AG04450 (cell line): ENCODE measurements at regions of chr16 and their contacts with region 1.

Region 1: DNA sequence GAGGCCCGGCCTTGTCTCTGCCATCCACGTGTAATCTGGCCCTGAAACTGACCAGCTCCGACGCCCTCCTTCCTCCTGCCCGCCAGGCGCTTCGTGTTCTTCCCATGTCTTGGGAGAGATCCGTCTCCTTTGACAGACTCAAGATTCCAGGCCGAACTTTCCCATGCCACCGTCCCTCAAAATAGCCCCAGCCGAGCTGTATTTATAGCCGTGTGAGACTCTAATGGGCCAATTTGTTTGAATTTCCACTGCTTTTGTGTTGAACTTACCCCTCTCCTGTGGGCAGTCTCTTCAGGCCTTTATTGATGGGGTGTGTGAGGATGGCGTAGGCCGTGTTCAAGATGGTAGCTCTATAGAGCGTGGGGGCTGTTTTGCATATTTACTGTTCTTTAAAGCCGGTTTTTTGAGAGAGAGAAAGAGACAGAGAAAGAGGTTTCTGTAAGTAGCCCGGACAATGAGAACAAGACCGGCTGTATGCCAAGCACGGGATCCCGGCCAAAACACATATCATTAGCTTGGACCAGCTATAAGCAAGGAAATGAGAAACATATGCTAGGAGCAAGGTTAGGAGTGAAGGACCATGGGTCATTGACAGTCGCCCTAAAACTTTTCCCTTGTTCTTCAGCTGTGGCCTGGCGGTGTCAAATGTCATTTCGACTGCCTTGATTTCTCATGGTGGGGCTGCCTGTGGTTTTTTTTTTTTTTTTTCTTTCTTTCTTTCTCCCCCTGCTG is 124.5 kb upstream of the ZFHX3 start:
- DNase-seq: peak; percentile 67
- H3K4me3 ChIP-seq: peak overlapping the region; percentile 1; the same call in 1 of the 2 replicates
- H3K27ac ChIP-seq: peak overlapping the region; percentile 71
- H3K27me3 ChIP-seq: no peaks in the 10 kb centered on the region
- CTCF ChIP-seq: peak; percentile 56

Region 2: DNA sequence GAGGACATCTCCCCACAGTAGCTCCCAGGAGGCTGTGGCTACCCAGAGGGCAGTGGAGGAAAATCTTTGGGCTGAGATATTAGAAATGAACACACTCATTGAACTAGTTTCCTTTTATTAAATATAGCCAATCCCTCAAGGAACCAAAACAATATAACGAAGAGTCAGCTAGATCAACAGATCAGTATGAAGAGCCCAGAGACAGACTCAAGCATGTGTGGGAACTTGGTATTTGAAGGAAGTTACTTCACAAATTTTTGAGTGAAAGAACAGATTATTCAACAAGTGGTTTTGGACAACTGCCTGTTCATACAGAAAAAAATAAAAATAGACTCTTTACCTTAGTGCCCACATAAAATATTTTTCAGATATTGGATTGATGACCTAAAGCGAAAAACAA is 816.8 kb before region 1 on chr16:
- CTCF ChIA-PET with region 1: no interaction called
- POLR2A ChIA-PET with region 1: no interaction called
- DNase-seq: no peak
- H3K4me3 ChIP-seq: no peak overlapping the region
- H3K27ac ChIP-seq: no peak overlapping the region
- H3K27me3 ChIP-seq: no peaks in the 10 kb centered on the region
- CTCF ChIP-seq: no peak

Region 3: GRCh38 chr16:72927199-72928089 is 245.0 kb before region 1 on chr16:
- CTCF ChIA-PET with region 1: no interaction called
- POLR2A ChIA-PET with region 1: interaction called, 11 read pairs
- DNase-seq: peak; percentile 78
- H3K4me3 ChIP-seq: no peak overlapping the region
- H3K27ac ChIP-seq: no peak overlapping the region
- H3K27me3 ChIP-seq: no peaks in the 10 kb centered on the region
- CTCF ChIP-seq: peak; percentile 12

Region 4: DNA sequence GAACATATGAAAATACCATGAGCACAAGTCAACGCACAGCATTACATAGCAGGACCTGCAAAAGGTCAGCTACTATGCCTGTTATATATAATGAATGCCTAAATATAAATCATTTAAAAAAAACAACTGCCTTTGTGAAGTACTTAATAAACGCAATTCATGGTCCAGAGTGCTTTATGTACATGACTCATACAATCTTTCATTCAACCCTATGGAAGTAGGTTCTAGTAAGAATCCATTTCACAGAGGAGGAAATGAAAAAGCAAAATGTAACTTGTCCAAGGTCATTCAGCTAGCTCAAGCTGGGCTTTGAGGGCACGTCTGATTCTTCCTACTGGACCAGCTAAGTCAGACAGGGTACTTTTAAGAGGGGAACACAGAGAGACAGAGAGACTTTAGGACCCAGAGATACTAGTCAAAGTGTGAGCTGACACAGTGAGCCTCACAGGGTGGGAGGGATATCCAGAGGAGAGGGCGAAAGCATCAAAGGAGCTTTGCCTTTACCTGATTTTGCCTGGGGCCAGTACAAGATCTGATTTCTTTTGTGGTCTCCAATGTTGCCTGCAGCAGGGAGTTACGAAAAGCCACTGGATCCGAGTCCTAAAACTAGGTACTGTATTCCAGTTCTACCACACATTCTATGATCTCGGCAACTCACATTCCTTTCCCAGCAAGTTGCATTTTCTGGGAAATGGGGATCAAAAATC is 41.1 kb before region 1 on chr16:
- CTCF ChIA-PET with region 1: no interaction called
- POLR2A ChIA-PET with region 1: interaction called, 11 read pairs
- DNase-seq: no peak
- H3K4me3 ChIP-seq: no peak overlapping the region
- H3K27ac ChIP-seq: no peak overlapping the region
- H3K27me3 ChIP-seq: peaks cover 4% of the 10 kb centered on the region
- CTCF ChIP-seq: no peak

Region 5: DNA sequence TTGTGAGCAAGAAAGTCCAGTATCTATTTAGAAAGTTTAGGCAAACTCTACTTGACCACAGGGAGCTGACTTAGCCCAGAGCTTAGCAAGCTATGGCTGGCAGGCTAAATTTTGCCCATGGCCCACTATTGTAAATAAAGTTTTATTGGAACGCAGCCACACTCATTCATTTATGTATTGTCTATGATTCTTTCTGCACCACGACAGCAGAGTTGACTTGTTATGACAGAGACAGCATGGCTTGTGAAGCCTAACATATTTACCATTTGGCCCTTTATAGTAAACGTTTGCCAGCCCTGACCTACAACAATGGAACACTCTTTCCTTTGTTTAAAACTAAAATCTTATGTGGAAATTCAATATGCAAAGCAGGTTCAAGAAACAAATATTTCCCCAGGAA is 24.4 kb before region 1 on chr16:
- CTCF ChIA-PET with region 1: no interaction called
- POLR2A ChIA-PET with region 1: no interaction called
- DNase-seq: no peak
- H3K4me3 ChIP-seq: no peak overlapping the region
- H3K27ac ChIP-seq: no peak overlapping the region
- H3K27me3 ChIP-seq: no peaks in the 10 kb centered on the region
- CTCF ChIP-seq: no peak

Region 6: GRCh38 chr16:73190688-73191659 is 18.6 kb after region 1 on chr16:
- CTCF ChIA-PET with region 1: interaction called, 12 read pairs
- POLR2A ChIA-PET with region 1: no interaction called
- DNase-seq: no peak
- H3K4me3 ChIP-seq: no peak overlapping the region
- H3K27ac ChIP-seq: no peak overlapping the region
- H3K27me3 ChIP-seq: peaks cover 8% of the 10 kb centered on the region
- CTCF ChIP-seq: no peak

Region 7: GRCh38 chr16:73202161-73202729 is 29.8 kb after region 1 on chr16:
- CTCF ChIA-PET with region 1: interaction called, 11 read pairs
- POLR2A ChIA-PET with region 1: no interaction called
- DNase-seq: peak; percentile 93
- H3K4me3 ChIP-seq: no peak overlapping the region
- H3K27ac ChIP-seq: peak overlapping the region; percentile 72
- H3K27me3 ChIP-seq: no peaks in the 10 kb centered on the region
- CTCF ChIP-seq: no peak

Region 8: DNA sequence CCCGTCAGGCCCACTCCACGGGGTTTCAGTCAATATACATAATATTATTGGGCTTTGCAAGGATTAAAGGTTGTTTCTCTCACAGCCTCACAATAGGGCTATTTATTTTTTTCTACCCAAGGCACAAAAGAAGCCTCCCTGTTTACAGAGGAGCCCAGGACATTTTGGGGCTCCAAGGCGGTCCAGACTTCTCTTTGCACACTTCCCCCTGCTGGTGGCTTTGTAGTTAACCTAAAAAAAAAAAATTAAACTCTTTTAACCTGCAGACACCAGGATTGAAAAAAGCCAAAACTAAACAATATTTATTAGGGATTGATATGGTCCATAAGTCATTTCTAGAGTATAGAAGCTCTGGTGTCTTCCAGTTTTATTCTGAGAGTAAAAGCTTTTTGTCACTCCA is 45.2 kb after region 1 on chr16:
- CTCF ChIA-PET with region 1: interaction called, 7 read pairs
- POLR2A ChIA-PET with region 1: interaction called, 11 read pairs
- DNase-seq: no peak
- H3K4me3 ChIP-seq: no peak overlapping the region
- H3K27ac ChIP-seq: no peak overlapping the region
- H3K27me3 ChIP-seq: no peaks in the 10 kb centered on the region
- CTCF ChIP-seq: peak; percentile 19; the same call in 1 of the 2 replicates